HEK293 (cell line): ENCODE measurements at regions of chr1 and their contacts with region 1.

Region 1: DNA sequence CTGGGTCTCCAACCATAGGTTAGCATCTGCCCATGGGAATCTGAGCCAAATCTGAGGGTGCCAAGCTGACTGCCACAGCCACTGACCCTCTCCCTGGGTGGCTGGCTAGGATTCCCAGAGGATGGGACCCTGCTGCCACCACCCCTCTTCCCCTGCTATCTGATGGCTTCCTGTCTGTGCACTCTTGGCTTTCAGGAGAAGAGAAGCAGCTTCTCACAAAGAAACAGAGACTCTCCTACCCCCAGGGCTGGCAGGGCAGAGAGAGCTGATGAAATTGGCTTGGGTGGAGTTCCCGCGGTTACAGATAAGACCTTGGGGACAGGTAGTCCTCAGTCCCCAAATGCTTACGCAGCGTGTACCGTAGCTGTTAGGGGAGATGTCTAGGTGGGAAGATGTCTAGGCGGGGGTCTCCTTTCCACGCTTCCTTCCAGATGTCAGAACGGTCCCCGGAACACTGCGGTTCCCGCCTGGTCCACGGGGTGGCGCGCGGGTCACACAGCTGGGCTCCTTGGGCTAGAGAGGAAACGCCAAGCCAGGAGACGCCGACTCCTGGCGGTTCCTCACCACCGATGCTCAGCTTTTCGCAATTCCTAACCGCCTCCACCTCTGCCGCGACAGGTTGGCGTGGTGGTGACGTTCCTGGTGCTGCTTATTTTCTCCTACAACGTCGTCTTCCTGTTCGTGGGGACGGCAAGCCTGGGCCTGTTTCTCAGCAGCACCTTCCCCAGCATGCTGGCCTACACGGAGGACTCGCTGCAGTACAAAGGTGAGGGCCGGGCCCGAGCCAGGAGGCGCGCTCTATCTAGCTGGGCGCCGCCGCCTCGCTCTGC is 40.1 kb downstream of the ELK4 start:
- H3K4me3 ChIP-seq: peak overlapping the region; percentile 12
- H3K27ac ChIP-seq: no peak overlapping the region
- H3K4me1 ChIP-seq: no peaks in the 10 kb centered on the region; the same call in 1 of the 2 replicates
- CTCF ChIP-seq: peak; percentile 98

Region 2: DNA sequence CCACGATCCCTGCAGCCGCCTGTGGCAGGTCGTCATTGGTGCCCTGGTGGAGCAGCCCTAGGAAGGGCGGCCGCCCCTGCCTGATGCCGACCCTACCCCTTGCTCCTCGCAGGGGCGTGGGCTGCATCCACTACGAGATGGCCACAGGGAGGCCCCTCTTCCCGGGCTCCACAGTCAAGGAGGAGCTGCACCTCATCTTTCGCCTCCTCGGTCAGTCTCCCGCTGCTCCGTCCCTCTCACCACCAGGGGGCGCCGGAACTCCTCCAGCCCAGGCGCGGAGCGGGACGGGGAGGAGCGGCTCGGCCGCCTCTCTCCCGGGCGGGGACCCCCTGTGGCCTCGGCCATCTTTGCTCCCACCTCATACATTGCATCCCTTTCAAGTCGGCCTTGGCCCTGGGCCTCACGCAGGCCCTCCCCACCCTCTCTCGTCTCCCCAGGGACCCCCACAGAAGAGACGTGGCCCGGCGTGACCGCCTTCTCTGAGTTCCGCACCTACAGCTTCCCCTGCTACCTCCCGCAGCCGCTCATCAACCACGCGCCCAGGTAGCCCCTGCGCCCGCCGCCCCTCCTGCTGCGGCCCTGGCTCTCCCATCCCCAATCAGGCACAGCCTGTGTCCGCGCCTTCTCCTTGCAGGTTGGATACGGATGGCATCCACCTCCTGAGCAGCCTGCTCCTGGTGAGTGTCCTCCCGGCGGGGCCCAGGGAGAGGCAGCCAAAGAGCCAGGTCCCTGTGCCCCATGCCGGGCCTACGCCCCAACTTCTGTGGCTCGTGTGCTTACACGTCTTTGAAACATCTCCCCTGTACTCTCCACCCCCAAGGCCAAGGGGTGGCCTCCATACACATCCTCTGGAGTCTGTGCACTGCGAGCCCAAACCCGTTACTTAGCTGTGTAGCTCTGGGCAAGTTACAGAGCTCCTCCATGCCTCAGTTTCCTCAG is 62.6 kb before region 1 on chr1:
- CTCF ChIA-PET with region 1: interaction called, 26 read pairs
- POLR2A ChIA-PET with region 1: no interaction called
- H3K4me3 ChIP-seq: no peak overlapping the region
- H3K27ac ChIP-seq: no peak overlapping the region
- H3K4me1 ChIP-seq: no peaks in the 10 kb centered on the region
- CTCF ChIP-seq: peak; percentile 97

Region 3: GRCh38 chr1:205610036-205610435 is 18.3 kb after region 1 on chr1:
- CTCF ChIA-PET with region 1: interaction called, 17 read pairs
- POLR2A ChIA-PET with region 1: interaction called, 5 read pairs
- H3K4me3 ChIP-seq: no peak overlapping the region
- H3K27ac ChIP-seq: no peak overlapping the region; the same call in 1 of the 2 replicates
- H3K4me1 ChIP-seq: peaks cover 8% of the 10 kb centered on the region
- CTCF ChIP-seq: no peak

Region 4: DNA sequence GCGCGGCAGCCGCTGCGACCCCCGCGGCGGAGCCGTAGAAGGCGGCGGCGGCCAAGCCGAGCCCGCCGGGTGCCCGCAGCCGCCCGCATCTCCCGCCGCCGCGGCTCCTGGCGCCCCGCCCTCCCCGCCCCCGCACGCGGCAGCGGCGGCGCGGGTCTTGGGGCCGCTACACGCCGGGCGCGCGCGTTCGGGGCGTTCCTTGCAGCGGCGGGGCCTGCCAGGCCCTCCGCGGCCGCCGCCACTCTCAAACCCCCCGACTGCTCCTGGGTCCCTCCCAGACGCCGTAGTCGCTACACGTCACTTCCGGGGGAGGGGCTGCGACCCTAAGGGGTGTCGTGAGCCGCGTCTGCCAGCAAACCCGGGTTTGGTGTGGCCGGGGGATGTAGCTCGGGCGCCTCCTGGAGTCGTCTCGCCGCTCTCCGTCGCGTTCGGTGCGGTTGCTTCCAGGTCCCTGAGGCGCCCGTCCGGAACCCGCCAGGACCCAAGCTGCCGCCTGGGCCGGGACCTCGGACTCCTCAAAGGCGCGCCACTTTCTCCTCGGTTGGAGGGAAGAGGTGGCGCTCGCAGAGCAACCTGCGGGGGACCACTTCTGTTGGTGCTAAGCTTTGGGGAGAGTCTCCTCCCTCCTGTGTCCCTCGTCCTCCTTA is 40.1 kb after region 1 on chr1 and contains the start of gene ELK4:
- CTCF ChIA-PET with region 1: interaction called, 32 read pairs
- POLR2A ChIA-PET with region 1: interaction called, 14 read pairs
- H3K4me3 ChIP-seq: peak within 1 kb of the TSS; percentile 83
- H3K27ac ChIP-seq: peak within 1 kb of the TSS; percentile 97
- H3K4me1 ChIP-seq: no peaks in the 10 kb centered on the region
- CTCF ChIP-seq: peak; percentile 95

Region 5: GRCh38 chr1:205645519-205645918 is 53.8 kb after region 1 on chr1:
- CTCF ChIA-PET with region 1: interaction called, 22 read pairs
- POLR2A ChIA-PET with region 1: no interaction called
- H3K4me3 ChIP-seq: no peak overlapping the region
- H3K27ac ChIP-seq: no peak overlapping the region
- H3K4me1 ChIP-seq: no peaks in the 10 kb centered on the region
- CTCF ChIP-seq: no peak

Region 6: GRCh38 chr1:205711104-205712020 is 119.6 kb after region 1 on chr1:
- CTCF ChIA-PET with region 1: interaction called, 78 read pairs
- POLR2A ChIA-PET with region 1: interaction called, 3 read pairs
- H3K4me3 ChIP-seq: no peak overlapping the region
- H3K27ac ChIP-seq: no peak overlapping the region
- H3K4me1 ChIP-seq: peaks cover 7% of the 10 kb centered on the region
- CTCF ChIP-seq: no peak; the same call in 1 of the 2 replicates